A673 (cell line): ENCODE measurements at regions of chr10 and their contacts with region 1.

Region 1: DNA sequence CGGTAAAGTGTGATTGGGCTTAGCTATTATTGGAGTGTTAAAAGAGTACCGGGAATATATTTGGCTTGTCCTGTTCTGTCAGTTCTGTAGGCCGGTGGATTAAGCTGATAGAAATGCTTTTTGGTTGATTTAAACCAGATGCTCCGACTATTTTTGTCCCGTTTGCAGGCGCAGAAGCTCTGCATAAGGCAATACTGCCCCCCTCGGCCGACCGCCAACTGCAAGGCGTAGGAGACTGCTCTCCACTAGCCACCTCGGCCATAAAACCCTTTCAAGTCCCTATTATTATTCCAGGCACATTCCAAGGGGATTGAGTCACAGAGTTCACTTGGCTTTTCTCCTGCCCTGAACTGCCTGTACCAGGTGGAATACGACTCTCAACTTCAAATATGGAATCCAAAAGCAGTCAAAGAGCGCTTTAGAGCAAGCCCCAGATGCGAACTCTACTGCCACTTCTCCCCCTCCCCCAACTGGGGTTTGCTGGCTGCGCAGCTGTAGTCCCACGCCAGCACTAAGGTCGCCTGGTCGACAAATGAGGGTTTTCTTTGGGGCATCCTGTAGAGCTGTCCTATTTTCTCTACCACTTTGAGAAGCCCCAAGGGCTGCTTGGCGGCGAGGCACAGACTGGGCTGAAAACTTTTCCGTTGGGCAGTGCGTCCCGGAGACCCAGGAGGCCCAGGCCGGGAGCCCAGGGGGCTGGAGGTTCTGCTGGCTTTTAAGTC is 108.3 kb downstream of the REEP3 start:
- DNase-seq: peak; percentile 99
- H3K4me3 ChIP-seq: peak overlapping the region; percentile 61
- H3K27ac ChIP-seq: peak overlapping the region; percentile 96
- H3K4me1 ChIP-seq: peaks cover 43% of the 10 kb centered on the region
- H3K27me3 ChIP-seq: no peaks in the 10 kb centered on the region
- CTCF ChIP-seq: peak; percentile 94

Region 2: DNA sequence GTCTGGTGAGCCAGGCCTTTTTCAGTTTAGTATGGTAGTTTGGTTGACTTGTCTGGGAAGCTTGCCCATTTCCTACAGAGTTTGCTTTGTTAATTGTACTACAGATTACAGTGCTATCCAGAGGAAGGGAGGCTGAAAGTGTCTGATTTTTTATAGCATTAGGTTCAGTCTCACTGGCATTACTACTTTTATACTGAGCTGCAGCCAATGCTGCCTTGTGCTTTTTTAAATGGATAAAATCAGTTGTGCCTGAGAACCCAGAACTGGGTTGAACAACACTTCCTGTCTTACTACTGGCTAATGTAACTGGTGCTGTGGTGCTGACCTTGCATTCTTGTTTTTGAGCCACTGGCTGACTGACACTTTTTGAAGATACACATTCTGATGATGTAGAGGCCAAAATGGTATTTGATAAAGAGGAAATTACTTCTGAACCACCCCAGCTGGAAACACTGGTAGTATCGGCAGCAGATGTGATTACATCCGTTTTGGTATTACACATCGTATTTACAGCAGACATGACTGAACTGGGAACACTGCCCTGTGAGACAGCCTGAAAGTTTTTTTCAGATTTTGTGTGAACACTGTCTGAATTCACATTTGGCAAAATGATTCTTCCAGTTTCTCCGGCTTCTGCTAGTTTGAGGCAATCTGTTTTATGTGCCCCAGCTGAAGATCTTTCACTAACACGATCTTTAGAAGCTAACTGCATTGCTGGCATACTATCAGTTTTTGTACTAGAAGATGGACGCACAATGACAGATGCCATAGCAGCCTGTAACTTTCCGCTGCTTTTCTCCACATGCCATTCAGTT is 422.3 kb before region 1 on chr10:
- CTCF ChIA-PET with region 1: no interaction called
- POLR2A ChIA-PET with region 1: no interaction called
- intact Hi-C with region 1: loop called (anchors 5 kb)
- DNase-seq: peak; percentile 88
- H3K4me3 ChIP-seq: peak overlapping the region; percentile 16
- H3K27ac ChIP-seq: peak overlapping the region; percentile 79
- H3K4me1 ChIP-seq: peaks cover 76% of the 10 kb centered on the region
- H3K27me3 ChIP-seq: no peaks in the 10 kb centered on the region
- CTCF ChIP-seq: no peak

Region 3: GRCh38 chr10:63268798-63269503 is 360.6 kb before region 1 on chr10:
- CTCF ChIA-PET with region 1: interaction called, 3 read pairs
- POLR2A ChIA-PET with region 1: no interaction called
- intact Hi-C with region 1: loop called (anchors 2 kb)
- DNase-seq: peak; percentile 95
- H3K4me3 ChIP-seq: peak overlapping the region; percentile 56
- H3K27ac ChIP-seq: peak overlapping the region; percentile 90
- H3K4me1 ChIP-seq: peaks cover 18% of the 10 kb centered on the region
- H3K27me3 ChIP-seq: no peaks in the 10 kb centered on the region
- CTCF ChIP-seq: peak; percentile 41; the same call in 1 of the 2 replicates

Region 4: GRCh38 chr10:63504125-63504880 is 125.2 kb before region 1 on chr10:
- CTCF ChIA-PET with region 1: no interaction called
- POLR2A ChIA-PET with region 1: no interaction called
- intact Hi-C with region 1: no loop called
- DNase-seq: no peak
- H3K4me3 ChIP-seq: no peak overlapping the region
- H3K27ac ChIP-seq: no peak overlapping the region
- H3K4me1 ChIP-seq: peaks cover 9% of the 10 kb centered on the region
- H3K27me3 ChIP-seq: no peaks in the 10 kb centered on the region
- CTCF ChIP-seq: peak; percentile 19; the same call in 1 of the 2 replicates

Region 5: GRCh38 chr10:63521416-63522276 is 107.9 kb before region 1 on chr10:
- CTCF ChIA-PET with region 1: interaction called, 3 read pairs
- POLR2A ChIA-PET with region 1: no interaction called
- intact Hi-C with region 1: loop called (anchors 5 kb)
- DNase-seq: peak; percentile 89
- H3K4me3 ChIP-seq: peak overlapping the region; percentile 63
- H3K27ac ChIP-seq: peak overlapping the region; percentile 97
- H3K4me1 ChIP-seq: peaks cover 45% of the 10 kb centered on the region
- H3K27me3 ChIP-seq: no peaks in the 10 kb centered on the region
- CTCF ChIP-seq: no peak

Region 6: DNA sequence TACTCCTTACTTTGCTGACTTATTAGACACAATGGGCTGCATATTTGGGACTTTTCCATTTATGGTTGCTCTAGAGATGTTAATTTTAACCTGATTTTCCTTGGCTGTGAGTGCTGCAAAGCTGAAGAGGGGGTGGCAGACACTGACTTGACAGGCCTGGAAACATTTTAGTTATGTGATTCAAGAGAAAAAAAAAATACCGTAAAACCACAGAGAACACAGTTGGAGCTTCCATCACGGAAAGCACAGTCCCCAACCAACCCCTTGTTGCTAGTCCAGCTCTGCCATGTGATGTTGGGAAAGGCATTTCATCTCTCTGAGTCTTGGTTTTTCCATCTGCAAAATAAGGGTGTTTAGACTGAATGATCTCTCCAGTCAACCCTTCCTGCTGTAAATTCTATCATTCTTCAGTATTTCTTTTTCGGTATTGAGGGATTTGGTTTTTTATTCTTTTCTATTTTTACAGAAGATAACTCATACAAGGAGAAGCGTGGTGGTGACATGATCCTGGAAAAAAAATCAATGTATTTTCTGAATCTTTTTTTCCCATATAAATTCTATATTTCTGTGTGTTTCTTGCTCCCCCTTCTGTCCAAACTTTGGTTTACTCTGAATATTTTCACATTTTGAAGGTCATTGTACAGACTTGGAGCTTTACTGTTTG is 137.7 kb after region 1 on chr10:
- CTCF ChIA-PET with region 1: no interaction called
- POLR2A ChIA-PET with region 1: interaction called, 3 read pairs
- intact Hi-C with region 1: loop called (anchors 5 kb)
- DNase-seq: peak; percentile 71
- H3K4me3 ChIP-seq: no peak overlapping the region
- H3K27ac ChIP-seq: no peak overlapping the region
- H3K4me1 ChIP-seq: peaks cover 32% of the 10 kb centered on the region
- H3K27me3 ChIP-seq: no peaks in the 10 kb centered on the region
- CTCF ChIP-seq: peak; percentile 70

Region 7: GRCh38 chr10:63887023-63887589 is 257.6 kb after region 1 on chr10:
- CTCF ChIA-PET with region 1: no interaction called
- POLR2A ChIA-PET with region 1: no interaction called
- intact Hi-C with region 1: no loop called
- DNase-seq: peak; percentile 20
- H3K4me3 ChIP-seq: no peak overlapping the region
- H3K27ac ChIP-seq: no peak overlapping the region
- H3K4me1 ChIP-seq: no peaks in the 10 kb centered on the region
- H3K27me3 ChIP-seq: no peaks in the 10 kb centered on the region
- CTCF ChIP-seq: peak; percentile 42